ENCODE measurements at regions of chr15 and their contacts with region 1.

Region 1: GRCh38 chr15:68820295-68821189 is at the start of gene ANP32A:
- DNase-seq: peak; percentile 94 to 99 (median 96)
- ATAC-seq: peak; percentile 62
- H3K4me3 ChIP-seq: peak within 1 kb of the TSS; percentile 98
- H3K4me3 Mint-ChIP-seq: peak within 1 kb of the TSS; percentile 95
- H3K27ac ChIP-seq: peak within 1 kb of the TSS; percentile 74 to 89
- H3K27ac Mint-ChIP-seq: peak within 1 kb of the TSS; percentile 92
- H3K4me1 ChIP-seq: peaks cover 22% of the 10 kb centered on the region
- H3K4me1 Mint-ChIP-seq: peaks cover 36% of the 10 kb centered on the region
- H3K27me3 ChIP-seq: no peaks in the 10 kb centered on the region
- H3K27me3 Mint-ChIP-seq: no peaks in the 10 kb centered on the region
- CTCF ChIP-seq: no peak
- total RNA-seq, gene ANP32A: 55.1 to 57.3 TPM

Region 2: GRCh38 chr15:68783226-68784058 is 37.1 kb before region 1 on chr15:
- CTCF ChIA-PET with region 1: interaction called, 11 read pairs
- POLR2A ChIA-PET with region 1: interaction called, 11 read pairs
- intact Hi-C with region 1: no loop called
- DNase-seq: peak; percentile 56 to 84 (median 66)
- ATAC-seq: peak; percentile 89
- H3K4me3 ChIP-seq: no peak overlapping the region
- H3K4me3 Mint-ChIP-seq: no peak overlapping the region
- H3K27ac ChIP-seq: no peak overlapping the region
- H3K27ac Mint-ChIP-seq: peak overlapping the region; percentile 76
- H3K4me1 ChIP-seq: peaks cover 36% of the 10 kb centered on the region
- H3K4me1 Mint-ChIP-seq: peaks cover 30% of the 10 kb centered on the region
- H3K27me3 ChIP-seq: no peaks in the 10 kb centered on the region
- H3K27me3 Mint-ChIP-seq: no peaks in the 10 kb centered on the region
- CTCF ChIP-seq: peak; percentile 70

Region 3: DNA sequence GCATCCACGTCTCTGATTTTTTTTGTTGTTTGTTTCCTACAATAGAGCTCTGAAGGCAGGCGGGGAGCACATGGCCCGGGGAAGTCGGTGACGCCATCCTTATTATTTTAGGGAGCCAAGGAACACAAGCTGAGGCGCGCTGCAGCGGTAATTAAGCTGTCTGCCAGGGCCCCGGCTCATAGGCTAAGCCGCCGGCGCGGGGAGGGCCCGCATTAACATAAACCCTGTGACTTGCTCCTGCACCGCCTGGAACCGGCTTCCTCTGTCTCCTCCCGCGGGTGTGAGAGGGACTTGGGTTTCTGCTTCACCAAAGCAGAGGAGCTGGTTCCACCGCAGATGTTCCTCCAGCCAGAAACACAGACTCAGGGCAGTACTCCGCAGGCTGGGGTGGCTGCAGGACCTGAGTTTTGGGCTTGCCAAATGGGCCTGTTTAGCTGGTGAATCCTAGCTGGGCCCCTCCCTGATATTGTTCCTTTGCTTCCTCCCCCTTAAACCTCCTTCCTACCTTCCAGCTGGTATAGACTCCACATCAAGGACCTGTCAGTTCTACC is 25.2 kb before region 1 on chr15:
- CTCF ChIA-PET with region 1: interaction called, 8 read pairs
- POLR2A ChIA-PET with region 1: interaction called, 94 read pairs
- intact Hi-C with region 1: loop called in 1 of 2 experiments (anchors 2 kb)
- DNase-seq: peak; percentile 48 to 82 (median 62)
- ATAC-seq: peak; percentile 92
- H3K4me3 ChIP-seq: peak overlapping the region; percentile 13
- H3K4me3 Mint-ChIP-seq: peak overlapping the region; percentile 52
- H3K27ac ChIP-seq: no peak overlapping the region
- H3K27ac Mint-ChIP-seq: peak overlapping the region; percentile 76
- H3K4me1 ChIP-seq: peaks cover 87% of the 10 kb centered on the region
- H3K4me1 Mint-ChIP-seq: peaks cover 100% of the 10 kb centered on the region
- H3K27me3 ChIP-seq: no peaks in the 10 kb centered on the region
- H3K27me3 Mint-ChIP-seq: no peaks in the 10 kb centered on the region
- CTCF ChIP-seq: no peak

Region 4: GRCh38 chr15:68807249-68807648 is 13.3 kb before region 1 on chr15:
- CTCF ChIA-PET with region 1: no interaction called
- POLR2A ChIA-PET with region 1: interaction called, 10 read pairs
- intact Hi-C with region 1: no loop called
- DNase-seq: no peak
- ATAC-seq: no peak
- H3K4me3 ChIP-seq: no peak overlapping the region
- H3K4me3 Mint-ChIP-seq: no peak overlapping the region
- H3K27ac ChIP-seq: no peak overlapping the region
- H3K27ac Mint-ChIP-seq: peak overlapping the region; percentile 3
- H3K4me1 ChIP-seq: peaks cover 77% of the 10 kb centered on the region
- H3K4me1 Mint-ChIP-seq: peaks cover 81% of the 10 kb centered on the region
- H3K27me3 ChIP-seq: no peaks in the 10 kb centered on the region
- H3K27me3 Mint-ChIP-seq: no peaks in the 10 kb centered on the region
- CTCF ChIP-seq: no peak

Region 5: DNA sequence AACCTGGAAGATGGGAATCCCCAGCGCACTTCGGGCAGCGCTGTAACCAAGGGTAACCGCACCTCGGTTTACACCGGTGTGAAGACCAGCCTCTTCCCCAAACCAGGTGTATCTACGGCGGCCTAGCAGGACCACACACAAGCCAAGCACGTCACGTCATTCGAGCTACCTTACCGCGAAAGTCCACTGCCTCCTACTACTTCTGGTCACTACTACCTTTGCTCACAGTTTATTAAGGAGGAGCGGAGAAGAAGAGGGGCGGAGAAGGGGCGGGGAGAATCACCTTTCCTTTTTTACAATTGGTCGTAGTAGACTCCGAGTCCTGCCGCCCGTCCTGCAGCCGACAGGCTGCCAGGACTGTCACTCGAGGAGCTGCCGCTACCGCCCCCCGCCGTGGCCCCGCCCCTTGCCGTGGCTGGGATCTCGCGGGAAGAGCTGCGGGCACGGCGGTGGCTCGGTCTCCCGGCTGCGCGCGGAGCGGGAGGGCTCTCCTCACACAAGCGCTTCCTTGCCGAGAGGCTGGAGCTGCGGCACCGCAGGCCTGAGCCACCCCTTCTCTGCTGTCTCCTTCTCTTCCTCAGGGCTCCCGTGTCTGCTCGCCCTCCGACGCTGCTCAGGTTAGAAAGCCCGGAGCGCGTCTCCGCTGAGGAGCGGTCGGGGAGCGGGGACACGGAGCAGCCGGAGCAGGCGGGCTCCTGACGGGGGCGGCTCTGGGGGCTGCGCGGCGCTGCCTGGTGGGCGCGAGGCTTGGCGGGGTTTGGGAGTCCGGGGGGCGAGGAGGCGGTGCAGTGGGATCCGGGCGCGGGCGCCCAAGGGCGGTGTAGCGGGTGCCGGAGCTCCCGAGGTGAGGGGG is 339.8 kb after region 1 on chr15 and contains the start of gene GLCE:
- CTCF ChIA-PET with region 1: no interaction called
- POLR2A ChIA-PET with region 1: no interaction called
- intact Hi-C with region 1: loop called in 1 of 2 experiments (anchors 10 kb)
- DNase-seq: peak; percentile 82 to 97 (median 92)
- ATAC-seq: peak; percentile 94
- H3K4me3 ChIP-seq: peak within 1 kb of the TSS; percentile 85
- H3K4me3 Mint-ChIP-seq: peak within 1 kb of the TSS; percentile 99
- H3K27ac ChIP-seq: peak within 1 kb of the TSS; percentile 18 to 60
- H3K27ac Mint-ChIP-seq: peak within 1 kb of the TSS; percentile 81
- H3K4me1 ChIP-seq: peaks cover 17% of the 10 kb centered on the region
- H3K4me1 Mint-ChIP-seq: peaks cover 17% of the 10 kb centered on the region
- H3K27me3 ChIP-seq: no peaks in the 10 kb centered on the region
- H3K27me3 Mint-ChIP-seq: no peaks in the 10 kb centered on the region
- CTCF ChIP-seq: no peak
- total RNA-seq, gene GLCE: 3.2 TPM

Measured in CD4-positive, alpha-beta T cell (primary cell).